ENCODE measurements at regions of chrX and their contacts with region 1.

Region 1: GRCh38 chrX:134158821-134159512 is 78.0 kb upstream of the CCDC160 start:
- DNase-seq: no peak
- H3K4me3 Mint-ChIP-seq: no peak overlapping the region
- H3K27ac Mint-ChIP-seq: peak overlapping the region; percentile 69
- H3K4me1 Mint-ChIP-seq: peaks cover 32% of the 10 kb centered on the region
- H3K27me3 Mint-ChIP-seq: no peaks in the 10 kb centered on the region

Region 2: DNA sequence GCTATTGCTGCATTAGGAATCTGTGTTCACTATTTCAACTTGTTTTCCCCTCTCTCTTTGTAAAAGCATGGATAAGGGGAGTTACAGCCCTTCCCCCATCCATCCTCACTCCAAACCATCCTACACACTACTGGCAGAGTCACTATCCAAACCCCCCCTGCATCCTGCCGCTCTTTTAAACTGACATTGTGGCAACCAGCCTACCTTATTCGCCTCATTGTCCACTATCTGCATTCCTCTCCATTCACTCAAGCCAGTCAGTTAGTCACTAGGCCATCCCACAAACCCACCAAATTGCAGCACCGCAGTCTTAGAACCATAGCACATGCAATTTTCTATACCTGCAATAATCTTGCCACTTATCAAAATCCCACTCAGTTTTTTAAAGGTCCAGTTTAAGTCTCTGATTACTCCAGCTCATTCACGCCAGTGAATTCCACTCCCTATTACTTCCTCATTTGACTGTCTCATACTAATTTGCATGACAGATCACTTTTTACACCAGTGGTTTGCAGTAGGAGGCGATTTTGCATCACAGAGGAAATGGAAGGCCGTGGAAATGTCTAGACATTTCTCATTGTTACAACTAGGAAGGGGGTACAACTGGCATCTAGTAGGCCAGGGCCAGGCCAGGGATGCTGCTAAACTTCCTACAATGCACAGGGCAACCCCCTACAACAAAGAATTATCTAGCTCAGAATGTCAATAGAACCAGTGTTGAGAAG is 1382.3 kb before region 1 on chrX:
- intact Hi-C with region 1: loop called (anchors 5 kb)
- DNase-seq: no peak
- H3K4me3 Mint-ChIP-seq: no peak overlapping the region
- H3K27ac Mint-ChIP-seq: no peak overlapping the region
- H3K4me1 Mint-ChIP-seq: peaks cover 18% of the 10 kb centered on the region
- H3K27me3 Mint-ChIP-seq: no peaks in the 10 kb centered on the region

Region 3: GRCh38 chrX:134013092-134013497 is 145.9 kb before region 1 on chrX:
- intact Hi-C with region 1: loop called (anchors 5 kb)
- DNase-seq: no peak
- H3K4me3 Mint-ChIP-seq: no peak overlapping the region
- H3K27ac Mint-ChIP-seq: no peak overlapping the region
- H3K4me1 Mint-ChIP-seq: peaks cover 12% of the 10 kb centered on the region
- H3K27me3 Mint-ChIP-seq: peaks cover 2% of the 10 kb centered on the region

Region 4: DNA sequence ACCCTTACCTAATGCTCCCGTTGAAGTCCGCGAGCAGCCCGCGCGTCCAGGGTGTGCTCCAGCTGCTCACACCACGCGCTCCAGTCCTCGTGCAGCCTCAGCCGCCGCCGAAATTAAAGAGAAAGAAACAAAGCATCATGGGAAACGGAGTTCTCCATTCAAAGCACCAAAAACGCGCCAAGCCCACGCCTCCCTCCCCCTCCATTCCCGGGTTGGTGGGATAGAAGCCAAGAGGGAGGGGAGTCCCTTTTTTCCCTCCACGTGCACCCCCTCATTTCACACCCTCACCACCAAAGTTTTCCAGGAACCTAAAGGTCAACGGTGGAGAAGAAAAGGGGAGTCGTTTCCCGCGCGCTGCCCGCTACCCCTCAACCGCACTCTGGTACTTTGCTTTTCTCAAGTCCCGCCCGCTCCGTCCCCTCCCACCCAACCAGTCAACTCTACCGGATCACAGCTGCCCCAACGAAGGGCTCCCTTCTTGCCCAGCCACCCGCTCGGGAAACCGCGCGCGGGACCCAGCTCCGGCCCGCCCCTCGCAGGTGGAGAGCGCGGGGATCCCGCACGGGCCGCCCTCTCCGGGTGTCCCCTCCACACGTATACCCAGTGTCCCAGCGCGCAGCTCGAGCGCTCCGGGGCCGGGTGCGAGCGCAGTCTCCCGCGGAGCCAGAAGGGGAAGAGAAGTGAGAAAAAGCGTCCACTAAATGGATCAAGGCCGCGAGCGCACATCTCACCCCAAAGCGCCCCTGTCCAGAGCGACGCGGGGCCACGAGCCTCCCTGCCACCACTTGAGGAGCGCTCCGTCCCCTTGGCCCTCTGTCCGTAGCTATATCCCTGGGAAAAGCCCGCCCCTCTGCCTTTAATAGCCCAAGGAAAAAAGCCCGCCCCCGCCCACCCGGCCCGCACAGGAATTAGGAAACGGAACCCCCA is 13.0 kb after region 1 on chrX:
- intact Hi-C with region 1: loop called (anchors 2 kb)
- DNase-seq: peak; percentile 42
- H3K4me3 Mint-ChIP-seq: peak overlapping the region; percentile 96
- H3K27ac Mint-ChIP-seq: peak overlapping the region; percentile 97
- H3K4me1 Mint-ChIP-seq: peaks cover 31% of the 10 kb centered on the region
- H3K27me3 Mint-ChIP-seq: peaks cover 2% of the 10 kb centered on the region

Measured in activated T-helper 2 cell treated with anti-CD3 and anti-CD28 coated beads, Interferon-gamma antibody, Interleukin-2, Interleukin-4, amounts not matched to agents 10 μg/mL and 5 μg/mL and 100 μg/mL, durations not matched to agents 14 hours and 24 hours and 36 hours (primary cell).